Mammary epithelial cell (primary cell): ENCODE measurements at regions of chr13 and their contacts with region 1.

Region 1: DNA sequence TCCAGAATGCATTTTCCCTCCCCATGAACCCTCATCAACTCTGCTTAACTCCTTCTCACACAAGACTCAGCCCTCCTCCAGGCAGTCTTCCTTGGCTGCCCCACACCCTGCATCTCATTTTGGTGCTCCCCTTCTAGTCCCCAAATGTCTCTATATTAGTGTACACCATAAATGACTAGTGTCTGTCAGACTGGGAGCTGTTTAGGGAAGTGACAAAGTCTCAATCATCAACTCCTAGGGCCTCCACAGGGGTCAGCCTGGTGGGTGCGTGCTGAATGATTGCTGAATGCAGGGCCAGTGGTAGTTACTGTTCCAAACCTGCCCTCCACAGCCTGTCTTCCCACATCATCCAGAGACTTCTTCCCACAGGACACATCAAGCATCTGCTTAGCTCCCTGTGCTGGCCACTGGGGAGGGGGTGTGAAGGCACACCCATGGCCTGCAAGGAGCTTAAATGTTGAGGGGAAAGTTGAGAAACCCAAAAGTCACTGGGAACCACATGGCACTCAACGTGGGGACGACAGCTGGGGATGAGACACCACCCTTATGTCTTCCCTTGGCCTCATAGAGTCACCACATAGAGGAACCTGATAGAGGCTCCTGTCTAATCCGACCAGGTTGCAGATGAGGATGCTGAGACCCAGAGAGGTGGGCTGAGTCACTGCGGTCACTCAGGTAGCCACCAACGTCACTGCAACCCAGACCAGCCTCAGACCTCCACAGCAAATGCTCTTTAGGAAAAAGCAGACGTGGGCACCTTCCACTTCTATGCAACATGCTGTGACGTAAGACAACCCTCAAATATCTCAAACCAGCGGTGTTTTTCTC is 79.3 kb upstream of the TM9SF2 start:
- DNase-seq: no peak
- H3K4me3 ChIP-seq: no peak overlapping the region
- H3K27ac ChIP-seq: no peak overlapping the region
- H3K4me1 ChIP-seq: no peaks in the 10 kb centered on the region
- H3K27me3 ChIP-seq: peaks cover 8% of the 10 kb centered on the region
- CTCF ChIP-seq: no peak

Region 2: GRCh38 chr13:98890186-98890585 is 531.8 kb before region 1 on chr13:
- CTCF ChIA-PET with region 1: no interaction called
- dilution Hi-C with region 1: no loop called
- in situ Hi-C with region 1: no loop called
- intact Hi-C with region 1: no loop called
- DNase-seq: peak; percentile 86
- H3K4me3 ChIP-seq: no peak overlapping the region
- H3K27ac ChIP-seq: peak overlapping the region; percentile 43
- H3K4me1 ChIP-seq: peaks cover 21% of the 10 kb centered on the region
- H3K27me3 ChIP-seq: no peaks in the 10 kb centered on the region
- CTCF ChIP-seq: no peak

Region 3: DNA sequence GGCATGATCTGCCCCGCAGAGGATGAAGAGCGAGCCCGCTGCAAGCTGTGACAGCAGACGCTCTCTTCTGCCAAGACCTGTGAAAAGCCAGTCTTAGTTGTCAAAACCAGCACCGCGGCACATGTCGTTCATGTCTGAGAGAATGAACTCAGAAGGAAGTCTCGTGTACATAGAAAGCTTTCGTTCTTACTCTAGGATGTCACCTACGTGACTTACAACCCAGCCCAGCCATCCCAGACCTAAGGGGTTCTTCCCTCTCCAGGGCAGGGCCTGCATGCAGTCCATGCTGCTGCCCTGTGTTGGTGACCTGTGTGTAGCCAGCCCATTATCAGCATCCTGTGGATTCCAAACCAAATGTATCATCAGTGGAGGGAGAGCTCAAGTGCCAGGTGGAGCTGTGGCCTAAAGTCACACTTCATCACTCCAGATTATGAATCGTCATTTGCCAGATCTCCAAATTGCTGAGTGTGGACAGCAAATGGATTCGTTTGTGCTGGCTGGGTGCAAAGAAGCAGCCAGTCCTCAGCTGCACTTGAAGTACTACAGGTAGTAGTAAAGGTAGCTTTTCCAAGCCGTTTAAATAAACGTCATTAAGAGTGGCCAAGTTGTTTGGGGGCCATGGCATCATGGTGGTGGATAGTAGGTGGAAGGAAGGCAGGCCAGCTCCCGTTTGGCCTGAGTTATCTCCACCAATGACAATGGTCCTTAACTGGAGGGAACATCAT is 40.9 kb before region 1 on chr13:
- CTCF ChIA-PET with region 1: no interaction called
- dilution Hi-C with region 1: loop called (anchors 5 kb)
- in situ Hi-C with region 1: no loop called
- intact Hi-C with region 1: no loop called
- DNase-seq: no peak
- H3K4me3 ChIP-seq: no peak overlapping the region
- H3K27ac ChIP-seq: no peak overlapping the region
- H3K4me1 ChIP-seq: no peaks in the 10 kb centered on the region
- H3K27me3 ChIP-seq: no peaks in the 10 kb centered on the region
- CTCF ChIP-seq: no peak

Region 4: DNA sequence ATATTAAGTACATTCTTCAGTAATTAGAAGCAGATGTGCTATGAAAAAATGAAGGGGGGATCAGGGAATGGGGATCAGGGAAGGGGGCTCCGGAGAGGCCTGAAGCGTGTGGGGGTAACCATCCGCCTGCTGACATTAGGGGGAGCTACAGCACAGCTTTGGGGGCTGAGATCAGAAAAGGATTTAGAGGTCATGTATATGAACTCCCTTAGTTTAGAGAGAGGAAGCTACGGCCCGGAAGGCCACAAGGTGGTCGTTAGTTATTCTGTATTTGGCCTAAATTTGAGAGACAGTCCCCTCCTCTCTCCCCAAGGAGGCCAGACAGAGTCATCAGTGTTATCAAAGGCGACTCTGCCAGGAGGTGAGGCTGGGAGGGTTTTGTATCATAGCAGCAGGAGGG is 178.3 kb after region 1 on chr13:
- CTCF ChIA-PET with region 1: no interaction called
- dilution Hi-C with region 1: no loop called
- in situ Hi-C with region 1: no loop called
- intact Hi-C with region 1: no loop called
- DNase-seq: no peak
- H3K4me3 ChIP-seq: no peak overlapping the region
- H3K27ac ChIP-seq: no peak overlapping the region
- H3K4me1 ChIP-seq: no peaks in the 10 kb centered on the region
- H3K27me3 ChIP-seq: no peaks in the 10 kb centered on the region
- CTCF ChIP-seq: peak in 1 of 2 donors; percentile 13